Calu3 (cell line): ENCODE measurements at regions of chr2 and their contacts with region 1.

Region 1: GRCh38 chr2:189412330-189412953 is 28.8 kb upstream of the WDR75 start:
- DNase-seq: peak; percentile 56
- H3K4me3 Mint-ChIP-seq: no peak overlapping the region
- H3K27ac Mint-ChIP-seq: no peak overlapping the region
- H3K4me1 Mint-ChIP-seq: no peaks in the 10 kb centered on the region
- H3K27me3 Mint-ChIP-seq: no peaks in the 10 kb centered on the region
- CTCF ChIP-seq: no peak

Region 2: GRCh38 chr2:187581125-187581896 is 1831.1 kb before region 1 on chr2:
- CTCF ChIA-PET with region 1: no interaction called
- intact Hi-C with region 1: loop called (anchors 10 kb)
- DNase-seq: peak; percentile 58
- H3K4me3 Mint-ChIP-seq: peak overlapping the region; percentile 39
- H3K27ac Mint-ChIP-seq: peak overlapping the region; percentile 79
- H3K4me1 Mint-ChIP-seq: peaks cover 32% of the 10 kb centered on the region
- H3K27me3 Mint-ChIP-seq: no peaks in the 10 kb centered on the region
- CTCF ChIP-seq: peak; percentile 59

Region 3: GRCh38 chr2:188997263-188997662 is 415.2 kb before region 1 on chr2:
- CTCF ChIA-PET with region 1: no interaction called
- intact Hi-C with region 1: loop called (anchors 10 kb)
- DNase-seq: no peak
- H3K4me3 Mint-ChIP-seq: no peak overlapping the region
- H3K27ac Mint-ChIP-seq: no peak overlapping the region
- H3K4me1 Mint-ChIP-seq: peaks cover 1% of the 10 kb centered on the region
- H3K27me3 Mint-ChIP-seq: no peaks in the 10 kb centered on the region
- CTCF ChIP-seq: no peak

Region 4: GRCh38 chr2:189115126-189115525 is 297.3 kb before region 1 on chr2:
- CTCF ChIA-PET with region 1: no interaction called
- intact Hi-C with region 1: loop called (anchors 1 kb)
- DNase-seq: no peak
- H3K4me3 Mint-ChIP-seq: no peak overlapping the region
- H3K27ac Mint-ChIP-seq: no peak overlapping the region
- H3K4me1 Mint-ChIP-seq: peaks cover 16% of the 10 kb centered on the region
- H3K27me3 Mint-ChIP-seq: no peaks in the 10 kb centered on the region
- CTCF ChIP-seq: no peak

Region 5: DNA sequence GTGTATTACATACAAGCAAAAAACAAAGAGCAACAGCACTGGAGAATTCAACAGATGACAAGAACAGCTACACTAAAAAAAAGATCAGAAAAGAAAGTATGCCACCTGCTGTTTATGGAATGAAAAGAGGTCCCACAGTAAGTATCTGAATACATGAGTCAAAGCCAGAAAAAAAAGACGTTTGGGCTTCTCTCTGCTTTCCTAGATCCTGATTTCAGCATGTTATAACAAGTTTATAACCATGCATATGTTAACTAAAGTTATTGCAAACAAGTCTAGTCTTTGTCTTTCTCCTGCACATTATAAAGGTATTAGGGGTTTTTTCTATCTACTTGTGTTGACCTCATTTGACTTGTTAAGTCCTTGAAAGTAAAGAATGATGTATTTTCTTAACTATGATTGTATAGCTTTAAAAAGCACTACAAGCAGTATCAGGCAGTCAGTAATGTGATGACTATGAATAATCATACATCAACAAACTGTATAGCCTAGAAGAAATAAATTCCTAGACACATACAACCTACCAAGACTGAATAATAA is 124.4 kb before region 1 on chr2:
- CTCF ChIA-PET with region 1: no interaction called
- intact Hi-C with region 1: loop called (anchors 1 kb)
- DNase-seq: peak; percentile 12
- H3K4me3 Mint-ChIP-seq: no peak overlapping the region
- H3K27ac Mint-ChIP-seq: no peak overlapping the region
- H3K4me1 Mint-ChIP-seq: peaks cover 7% of the 10 kb centered on the region
- H3K27me3 Mint-ChIP-seq: no peaks in the 10 kb centered on the region
- CTCF ChIP-seq: no peak

Region 6: DNA sequence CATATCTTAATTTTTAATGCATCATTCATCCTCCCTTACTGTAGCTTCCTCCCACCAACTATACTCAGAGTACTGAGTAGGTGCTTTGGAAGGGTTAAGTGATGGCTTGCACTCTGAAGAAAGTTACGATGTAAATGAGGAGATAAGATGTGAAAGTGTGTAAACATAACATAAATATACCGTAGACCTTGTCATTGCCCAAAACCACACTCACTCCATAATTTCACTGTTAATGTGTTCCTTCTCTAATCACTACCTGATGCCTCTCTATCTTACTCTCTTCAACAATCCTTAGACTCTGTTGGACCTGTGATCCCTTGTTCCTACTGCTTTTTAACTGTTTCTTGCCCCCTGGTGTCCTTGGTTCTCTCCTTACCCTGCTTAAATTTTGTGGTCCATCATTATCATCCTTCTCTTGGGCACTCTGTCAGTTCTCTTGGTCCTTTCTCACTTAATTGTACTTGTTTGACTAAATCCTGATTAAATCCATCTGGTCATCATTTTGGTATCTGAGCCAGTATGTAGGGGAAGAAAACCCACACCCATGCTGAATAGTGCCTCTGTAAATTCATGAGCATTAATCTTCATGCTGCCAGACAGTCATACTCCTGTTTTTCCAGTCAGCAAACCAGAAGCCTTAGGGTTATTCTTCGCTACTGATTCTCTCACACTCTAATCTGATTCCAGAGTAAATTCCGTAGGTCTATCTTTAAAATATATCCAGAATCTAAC is 416.8 kb after region 1 on chr2:
- CTCF ChIA-PET with region 1: no interaction called
- intact Hi-C with region 1: no loop called
- DNase-seq: no peak
- H3K4me3 Mint-ChIP-seq: no peak overlapping the region
- H3K27ac Mint-ChIP-seq: no peak overlapping the region
- H3K4me1 Mint-ChIP-seq: peaks cover 9% of the 10 kb centered on the region
- H3K27me3 Mint-ChIP-seq: no peaks in the 10 kb centered on the region
- CTCF ChIP-seq: no peak

Region 7: DNA sequence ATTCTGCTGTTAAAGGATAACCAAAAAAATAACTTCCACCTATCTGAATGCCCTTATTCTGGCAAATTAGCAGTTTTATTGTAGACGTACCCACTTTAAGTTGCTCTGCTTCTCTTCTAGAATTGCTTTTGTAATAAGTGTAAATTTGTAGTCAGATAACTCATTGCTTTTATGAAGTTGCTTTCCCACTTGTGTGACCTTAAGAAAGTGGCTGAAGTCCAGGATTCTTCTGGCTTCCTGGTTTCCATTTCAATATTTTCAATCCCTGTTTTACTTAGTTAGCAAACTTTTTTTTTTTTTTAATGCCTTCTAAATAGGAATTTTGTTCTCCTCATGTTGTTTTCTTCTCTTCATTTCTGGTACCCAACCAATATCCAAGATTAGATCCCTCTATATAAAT is 1528.0 kb after region 1 on chr2:
- CTCF ChIA-PET with region 1: no interaction called
- intact Hi-C with region 1: no loop called
- DNase-seq: no peak
- H3K4me3 Mint-ChIP-seq: no peak overlapping the region
- H3K27ac Mint-ChIP-seq: no peak overlapping the region
- H3K4me1 Mint-ChIP-seq: no peaks in the 10 kb centered on the region
- H3K27me3 Mint-ChIP-seq: no peaks in the 10 kb centered on the region
- CTCF ChIP-seq: no peak